ENCODE measurements at regions of chr19 and their contacts with region 1.

Region 1: GRCh38 chr19:10915130-10916091 is 13.0 kb downstream of the YIPF2 start:
- DNase-seq: peak; percentile 88
- ATAC-seq: peak; percentile 98
- H3K4me3 ChIP-seq: no peak overlapping the region
- H3K27ac ChIP-seq: peak overlapping the region; percentile 47
- H3K4me1 ChIP-seq: peaks cover 15% of the 10 kb centered on the region
- H3K27me3 ChIP-seq: no peaks in the 10 kb centered on the region
- CTCF ChIP-seq: no peak

Region 2: GRCh38 chr19:10858204-10858828 is 57.1 kb before region 1 on chr19:
- CTCF ChIA-PET with region 1: interaction called, 11 read pairs
- POLR2A ChIA-PET with region 1: no interaction called
- intact Hi-C with region 1: no loop called
- DNase-seq: peak; percentile 42
- ATAC-seq: no peak
- H3K4me3 ChIP-seq: no peak overlapping the region
- H3K27ac ChIP-seq: no peak overlapping the region
- H3K4me1 ChIP-seq: no peaks in the 10 kb centered on the region
- H3K27me3 ChIP-seq: no peaks in the 10 kb centered on the region
- CTCF ChIP-seq: peak; percentile 97

Region 3: DNA sequence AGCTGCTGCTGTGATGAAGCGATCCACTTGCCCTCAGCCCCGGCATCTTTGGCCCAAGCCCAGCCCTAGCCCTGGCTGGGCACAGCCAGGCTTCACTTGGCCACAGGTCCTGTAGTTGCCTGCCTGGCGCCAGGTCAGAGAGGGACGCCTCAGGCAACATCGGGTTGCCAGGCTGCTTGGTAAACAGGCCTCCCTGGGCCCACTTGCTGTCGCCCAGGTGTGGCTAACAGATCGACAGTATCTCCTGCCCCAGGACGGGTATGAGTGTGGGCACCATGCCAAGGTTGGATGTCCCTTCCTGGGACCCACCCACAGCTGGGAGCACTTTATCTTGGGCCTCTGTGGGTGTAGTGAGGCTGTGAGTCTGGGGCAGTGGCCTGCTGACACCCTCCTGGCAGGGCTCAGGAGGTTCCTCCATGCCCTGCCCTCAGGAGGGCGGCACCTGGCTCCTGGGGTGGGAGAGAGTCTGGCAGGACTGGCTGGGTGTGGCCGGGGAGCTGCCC is 16.2 kb before region 1 on chr19:
- CTCF ChIA-PET with region 1: no interaction called
- POLR2A ChIA-PET with region 1: no interaction called
- intact Hi-C with region 1: no loop called
- DNase-seq: peak; percentile 95
- ATAC-seq: peak; percentile 75
- H3K4me3 ChIP-seq: peak overlapping the region; percentile 35; the same call in 1 of the 2 replicates
- H3K27ac ChIP-seq: peak overlapping the region; percentile 73
- H3K4me1 ChIP-seq: peaks cover 36% of the 10 kb centered on the region
- H3K27me3 ChIP-seq: no peaks in the 10 kb centered on the region
- CTCF ChIP-seq: no peak

Measured in PC-3 (cell line).